CD8-positive, alpha-beta memory T cell (primary cell): ENCODE measurements at regions of chr9 and their contacts with region 1.

Region 1: GRCh38 chr9:35646533-35647265 is 4.0 kb downstream of the SIT1 start:
- DNase-seq: peak; percentile 87 to 93 (median 90)
- H3K4me3 ChIP-seq: peak overlapping the region; percentile 93
- H3K4me3 Mint-ChIP-seq: peak overlapping the region; percentile 91 to 98 (median 94)
- H3K27ac ChIP-seq: peak overlapping the region; percentile 85
- H3K27ac Mint-ChIP-seq: peak overlapping the region; percentile 87 to 99 (median 98)
- H3K4me1 ChIP-seq: peaks cover 54% of the 10 kb centered on the region
- H3K4me1 Mint-ChIP-seq: peaks cover 58 to 75% (median 67%) of the 10 kb centered on the region in 3 donors
- H3K27me3 ChIP-seq: no peaks in the 10 kb centered on the region
- H3K27me3 Mint-ChIP-seq: no peaks in the 10 kb centered on the region

Region 2: GRCh38 chr9:35603987-35604577 is 42.6 kb before region 1 on chr9:
- CTCF ChIA-PET with region 1: interaction called, 200 read pairs
- POLR2A ChIA-PET with region 1: interaction called, 3 read pairs
- DNase-seq: peak; percentile 99 to 100 (median 99)
- H3K4me3 ChIP-seq: peak overlapping the region; percentile 99
- H3K4me3 Mint-ChIP-seq: peak overlapping the region; percentile 94 to 99 (median 98)
- H3K27ac ChIP-seq: peak overlapping the region; percentile 87
- H3K27ac Mint-ChIP-seq: peak overlapping the region; percentile 96 to 100 (median 98)
- H3K4me1 ChIP-seq: peaks cover 21% of the 10 kb centered on the region
- H3K4me1 Mint-ChIP-seq: peaks cover 33 to 38% (median 34%) of the 10 kb centered on the region in 3 donors
- H3K27me3 ChIP-seq: no peaks in the 10 kb centered on the region
- H3K27me3 Mint-ChIP-seq: peaks cover 0 to 2% of the 10 kb centered on the region in 2 donors

Region 3: GRCh38 chr9:35616681-35617459 is 29.8 kb before region 1 on chr9:
- CTCF ChIA-PET with region 1: interaction called, 200 read pairs
- POLR2A ChIA-PET with region 1: interaction called, 17 read pairs
- DNase-seq: peak; percentile 63 to 84 (median 71)
- H3K4me3 ChIP-seq: peak overlapping the region; percentile 82
- H3K4me3 Mint-ChIP-seq: peak overlapping the region; percentile 85 to 92 (median 89)
- H3K27ac ChIP-seq: peak overlapping the region; percentile 70
- H3K27ac Mint-ChIP-seq: peak overlapping the region; percentile 89 to 100 (median 98)
- H3K4me1 ChIP-seq: peaks cover 34% of the 10 kb centered on the region
- H3K4me1 Mint-ChIP-seq: peaks cover 42 to 49% (median 46%) of the 10 kb centered on the region in 3 donors
- H3K27me3 ChIP-seq: no peaks in the 10 kb centered on the region
- H3K27me3 Mint-ChIP-seq: peaks cover 0 to 1% of the 10 kb centered on the region in 2 donors

Region 4: GRCh38 chr9:35657546-35658136 is 10.9 kb after region 1 on chr9 and contains the start of gene RMRP:
- CTCF ChIA-PET with region 1: interaction called, 162 read pairs
- POLR2A ChIA-PET with region 1: interaction called, 53 read pairs
- DNase-seq: peak; percentile 76 to 94 (median 91)
- H3K4me3 ChIP-seq: peak within 1 kb of the TSS; percentile 90
- H3K4me3 Mint-ChIP-seq: peak within 1 kb of the TSS; percentile 84 to 97 (median 92)
- H3K27ac ChIP-seq: peak within 1 kb of the TSS; percentile 99
- H3K27ac Mint-ChIP-seq: peak within 1 kb of the TSS; percentile 97 to 100 (median 99)
- H3K4me1 ChIP-seq: peaks cover 60% of the 10 kb centered on the region
- H3K4me1 Mint-ChIP-seq: peaks cover 61 to 79% (median 72%) of the 10 kb centered on the region in 3 donors
- H3K27me3 ChIP-seq: no peaks in the 10 kb centered on the region
- H3K27me3 Mint-ChIP-seq: peaks cover 4 to 9% of the 10 kb centered on the region in 2 donors
- total RNA-seq, gene RMRP: 7,718 to 11,549 TPM

Region 5: DNA sequence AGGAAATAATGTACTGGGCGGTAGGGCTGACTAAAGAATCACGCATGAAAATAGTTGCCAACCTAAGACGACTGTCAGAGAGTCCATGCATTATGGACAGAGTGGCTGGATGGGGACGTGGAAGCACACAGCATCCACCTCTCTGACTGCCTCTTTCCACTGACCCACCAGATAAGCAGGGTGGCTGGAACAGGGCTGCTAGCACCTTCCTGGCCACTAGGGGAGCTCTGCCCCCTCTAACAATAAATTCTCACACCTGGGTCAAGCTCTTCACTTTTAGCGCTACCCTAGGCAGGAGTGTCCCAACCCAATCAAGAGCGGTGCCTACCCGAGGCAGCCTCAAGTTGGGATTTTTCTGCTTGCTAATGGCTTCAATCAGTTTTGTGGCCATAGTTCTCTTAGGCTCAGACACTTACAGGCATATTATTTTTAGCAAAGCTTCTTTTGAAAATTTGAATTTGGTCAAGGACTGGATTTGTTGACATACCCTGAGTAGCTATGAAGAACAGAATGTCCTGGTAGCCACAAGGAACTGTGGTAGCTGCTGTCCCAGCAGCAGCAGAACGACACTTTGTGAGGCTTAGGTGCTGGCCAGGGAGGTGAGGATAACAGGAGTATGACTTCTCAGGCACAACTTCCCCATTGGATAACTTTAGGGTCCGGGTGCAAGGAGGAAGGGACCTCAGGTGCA is 50.0 kb after region 1 on chr9:
- CTCF ChIA-PET with region 1: interaction called, 49 read pairs
- POLR2A ChIA-PET with region 1: interaction called, 11 read pairs
- DNase-seq: peak; percentile 36 to 71 (median 56)
- H3K4me3 ChIP-seq: no peak overlapping the region
- H3K4me3 Mint-ChIP-seq: peak overlapping the region in 2 of 7 donors; percentile 17 to 48
- H3K27ac ChIP-seq: no peak overlapping the region
- H3K27ac Mint-ChIP-seq: peak overlapping the region; percentile 47 to 94 (median 82)
- H3K4me1 ChIP-seq: no peaks in the 10 kb centered on the region
- H3K4me1 Mint-ChIP-seq: peaks cover 7 to 14% (median 13%) of the 10 kb centered on the region in 3 donors
- H3K27me3 ChIP-seq: no peaks in the 10 kb centered on the region
- H3K27me3 Mint-ChIP-seq: no peaks in the 10 kb centered on the region

Region 6: DNA sequence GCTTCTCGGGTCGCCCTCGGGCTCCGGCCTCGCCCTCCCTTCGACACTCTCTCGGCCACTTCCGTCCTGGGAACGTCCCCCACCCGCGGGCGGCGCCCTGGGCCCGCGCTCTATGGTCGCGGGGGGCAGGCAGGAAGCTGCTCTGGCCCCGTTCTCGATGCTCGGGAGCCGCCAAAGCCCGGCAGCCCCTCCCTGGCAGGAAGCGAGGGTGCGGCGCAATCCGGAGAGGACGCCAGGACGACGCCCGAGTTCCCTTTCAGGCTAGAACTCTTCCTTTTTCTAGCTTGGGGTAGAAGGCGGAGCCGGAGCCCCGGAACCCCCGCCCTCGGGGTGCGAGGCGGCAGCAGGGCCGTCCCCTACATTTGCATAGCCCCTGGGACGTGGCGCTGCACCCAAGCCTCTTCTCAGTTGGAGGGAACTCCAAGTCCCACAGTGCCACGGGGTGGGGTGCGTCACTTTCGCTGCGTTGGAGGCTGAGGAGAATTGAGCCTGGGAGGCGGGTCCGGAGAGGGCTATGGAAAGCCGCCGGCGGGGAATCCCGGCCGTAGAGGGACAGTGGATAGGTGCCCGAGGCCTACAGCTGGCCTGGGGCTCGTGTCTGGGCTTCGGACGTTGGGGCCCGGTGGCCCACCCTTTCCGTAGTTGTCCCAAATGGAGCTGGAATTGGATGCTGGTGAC is 85.6 kb after region 1 on chr9 and contains the starts of genes CREB3 and TLN1:
- CTCF ChIA-PET with region 1: interaction called, 44 read pairs
- POLR2A ChIA-PET with region 1: interaction called, 44 read pairs
- DNase-seq: peak; percentile 91 to 98 (median 97)
- H3K4me3 ChIP-seq: peak within 1 kb of the TSS; percentile 97
- H3K4me3 Mint-ChIP-seq: peak within 1 kb of the TSS in 4 of 7 donors; percentile 87 to 96 (median 94)
- H3K27ac ChIP-seq: peak within 1 kb of the TSS; percentile 92
- H3K27ac Mint-ChIP-seq: peak within 1 kb of the TSS in 7 of 8 donors; percentile 92 to 98 (median 95)
- H3K4me1 ChIP-seq: peaks cover 63% of the 10 kb centered on the region
- H3K4me1 Mint-ChIP-seq: peaks cover 20 to 27% (median 22%) of the 10 kb centered on the region in 3 donors
- H3K27me3 ChIP-seq: no peaks in the 10 kb centered on the region
- H3K27me3 Mint-ChIP-seq: no peaks in the 10 kb centered on the region
- total RNA-seq, gene CREB3: 38.0 to 38.6 TPM
- total RNA-seq, gene TLN1: 248 to 249 TPM